ENCODE measurements at regions of chr5 and their contacts with region 1.

Region 1: GRCh38 chr5:118987988-118988865 is at the start of gene DTWD2:
- DNase-seq: peak; percentile 91

Region 2: GRCh38 chr5:118620233-118620632 is 368.0 kb before region 1 on chr5:
- CTCF ChIA-PET with region 1: no interaction called
- POLR2A ChIA-PET with region 1: no interaction called
- DNase-seq: no peak

Region 3: GRCh38 chr5:118953652-118954005 is 34.6 kb before region 1 on chr5:
- CTCF ChIA-PET with region 1: no interaction called
- POLR2A ChIA-PET with region 1: no interaction called
- DNase-seq: no peak

Region 4: GRCh38 chr5:119070828-119071572 is 82.8 kb after region 1 on chr5 and contains the start of gene DMXL1:
- CTCF ChIA-PET with region 1: no interaction called
- POLR2A ChIA-PET with region 1: interaction called, 15 read pairs
- DNase-seq: peak; percentile 87

Region 5: DNA sequence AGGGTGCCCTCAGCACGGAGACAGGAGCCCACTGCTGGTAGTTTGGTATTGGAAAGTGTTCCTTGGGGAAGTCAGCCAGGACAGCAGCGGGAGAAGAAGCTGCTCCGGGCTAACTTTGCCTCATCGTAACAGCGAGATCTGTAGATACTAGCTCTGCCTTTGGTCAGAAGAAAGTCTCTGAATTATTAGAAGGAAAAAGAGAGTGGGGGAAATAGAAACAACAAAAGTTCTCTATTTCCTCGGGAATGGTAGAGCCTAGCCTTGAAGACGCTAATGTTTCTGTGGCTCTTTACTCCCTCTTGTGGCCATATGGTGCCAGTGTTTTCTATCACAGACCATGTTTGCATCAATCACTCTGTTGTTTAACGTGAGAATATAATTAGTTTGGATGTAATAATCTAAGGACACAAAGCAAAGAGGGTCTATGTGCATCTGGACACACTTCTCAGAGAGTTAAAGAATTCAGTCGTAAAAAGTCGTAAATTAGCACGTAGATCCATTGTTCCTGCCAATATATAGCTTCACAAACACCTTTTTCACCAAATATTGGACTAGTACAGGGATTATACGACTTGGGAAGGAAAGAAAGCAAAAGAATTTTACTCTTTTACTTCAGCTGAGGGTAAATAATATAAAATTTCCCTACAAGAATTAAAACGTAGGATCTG is 423.8 kb after region 1 on chr5:
- CTCF ChIA-PET with region 1: interaction called, 44 read pairs
- POLR2A ChIA-PET with region 1: interaction called, 5 read pairs
- DNase-seq: peak; percentile 71